ENCODE measurements at regions of chr3 and their contacts with region 1.

Region 1: GRCh38 chr3:150737874-150738713 is 24.9 kb downstream of the SIAH2 start:
- DNase-seq: peak; percentile 77
- ATAC-seq: peak; percentile 73
- H3K4me3 Mint-ChIP-seq: peak overlapping the region; percentile 40
- H3K27ac Mint-ChIP-seq: peak overlapping the region; percentile 93
- H3K4me1 Mint-ChIP-seq: peaks cover 72% of the 10 kb centered on the region
- H3K27me3 Mint-ChIP-seq: no peaks in the 10 kb centered on the region

Region 2: DNA sequence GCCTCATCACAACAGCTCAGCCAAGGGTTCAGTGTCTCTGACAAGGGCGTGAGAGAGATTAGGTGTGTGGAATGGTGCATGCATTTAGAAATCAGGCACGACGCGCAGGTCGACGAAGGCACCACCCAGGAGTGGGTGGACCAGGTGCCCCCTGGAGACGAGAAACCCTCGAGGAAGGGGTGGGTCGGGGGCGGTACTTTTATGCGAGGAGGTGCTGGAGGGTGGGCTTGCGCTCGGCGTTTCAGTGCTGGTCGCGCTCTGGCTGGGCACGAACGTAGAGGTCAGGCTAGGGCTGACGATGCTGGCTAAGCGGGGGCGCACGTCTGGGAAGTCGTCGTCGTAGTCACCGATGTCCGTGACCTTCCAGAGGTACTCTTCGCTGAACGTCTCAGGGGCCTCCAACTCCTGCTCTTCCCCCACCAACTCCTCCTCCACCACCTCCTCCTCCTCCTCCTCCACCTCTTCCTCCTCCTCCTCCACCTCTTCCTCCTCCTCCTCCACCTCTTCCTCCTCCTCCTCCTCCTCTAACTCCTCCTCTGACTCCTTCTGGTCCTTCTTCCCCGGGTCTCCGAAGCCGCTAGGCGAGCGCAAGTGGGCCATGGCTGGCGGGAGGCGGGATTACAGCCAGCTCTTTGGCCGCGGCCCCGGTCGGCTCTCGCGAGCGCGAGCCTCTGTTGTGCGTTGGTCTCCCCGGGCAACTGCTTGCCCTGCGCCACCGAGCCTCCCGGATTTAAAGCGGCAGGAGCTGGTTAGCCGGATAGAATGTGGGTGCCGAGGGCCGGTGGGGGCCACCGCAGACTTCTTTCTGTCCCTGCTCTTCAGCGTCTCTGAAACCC is 34.6 kb before region 1 on chr3 and contains the start of gene ERICH6:
- CTCF ChIA-PET with region 1: no interaction called
- POLR2A ChIA-PET with region 1: no interaction called
- intact Hi-C with region 1: loop called in 1 of 2 experiments (anchors 2 kb)
- DNase-seq: peak; percentile 93
- ATAC-seq: peak; percentile 96
- H3K4me3 Mint-ChIP-seq: peak within 1 kb of the TSS; percentile 87
- H3K27ac Mint-ChIP-seq: peak within 1 kb of the TSS; percentile 91
- H3K4me1 Mint-ChIP-seq: peaks cover 31% of the 10 kb centered on the region
- H3K27me3 Mint-ChIP-seq: no peaks in the 10 kb centered on the region
- total RNA-seq, gene ERICH6: 0.58 TPM in 1 of 2 experiments, not detected in the other

Region 3: DNA sequence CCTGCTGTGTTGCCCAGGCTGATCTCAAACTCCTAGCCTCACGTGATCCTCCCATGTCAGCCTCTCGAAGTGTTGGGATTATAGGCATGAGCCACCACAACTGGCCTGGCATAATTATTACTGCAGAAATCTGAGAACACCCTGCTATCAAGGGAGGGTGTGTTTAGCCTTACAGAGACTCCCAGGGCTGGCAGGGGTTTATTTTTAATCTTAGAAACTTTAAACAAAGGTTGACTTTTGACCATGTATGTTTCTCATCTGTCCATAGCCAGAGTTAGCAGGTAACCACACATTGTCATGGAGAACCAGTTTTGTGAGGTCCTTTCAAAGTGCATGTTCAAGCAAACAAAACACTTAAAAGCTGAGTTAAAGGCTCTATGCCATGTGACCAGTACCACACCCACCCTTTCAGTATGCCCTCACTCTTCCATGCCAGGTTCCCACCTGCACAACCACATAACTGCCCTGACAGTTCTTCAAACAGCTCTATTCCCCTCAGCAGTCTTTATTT is 13.7 kb after region 1 on chr3:
- CTCF ChIA-PET with region 1: interaction called, 5 read pairs
- POLR2A ChIA-PET with region 1: no interaction called
- intact Hi-C with region 1: loop called in 1 of 2 experiments (anchors 1 kb)
- DNase-seq: no peak
- ATAC-seq: peak; percentile 6
- H3K4me3 Mint-ChIP-seq: no peak overlapping the region
- H3K27ac Mint-ChIP-seq: peak overlapping the region; percentile 76
- H3K4me1 Mint-ChIP-seq: peaks cover 85% of the 10 kb centered on the region
- H3K27me3 Mint-ChIP-seq: no peaks in the 10 kb centered on the region

Region 4: GRCh38 chr3:150975086-150975991 is 237.2 kb after region 1 on chr3:
- CTCF ChIA-PET with region 1: no interaction called
- POLR2A ChIA-PET with region 1: no interaction called
- intact Hi-C with region 1: loop called in 1 of 2 experiments (anchors 5 kb)
- DNase-seq: peak; percentile 20
- ATAC-seq: peak; percentile 84
- H3K4me3 Mint-ChIP-seq: no peak overlapping the region
- H3K27ac Mint-ChIP-seq: peak overlapping the region; percentile 63
- H3K4me1 Mint-ChIP-seq: peaks cover 13% of the 10 kb centered on the region
- H3K27me3 Mint-ChIP-seq: peaks cover 19% of the 10 kb centered on the region